Dendritic cell treated with granulocyte-macrophage colony-stimulating factor and Interleukin-4, amounts not matched to agents 40 ng/mL and 50 ng/mL, for 4 days (primary cell): ENCODE measurements at regions of chr17 and their contacts with region 1.

Region 1: GRCh38 chr17:83051395-83052233 is 27.8 kb upstream of the METRNL start:
- H3K4me3 Mint-ChIP-seq: peak overlapping the region; percentile 87
- H3K27ac Mint-ChIP-seq: peak overlapping the region; percentile 94
- H3K4me1 Mint-ChIP-seq: peaks cover 62% of the 10 kb centered on the region
- H3K27me3 Mint-ChIP-seq: no peaks in the 10 kb centered on the region

Region 2: GRCh38 chr17:81833160-81833920 is 1218.3 kb before region 1 on chr17 and contains the start of gene MCRIP1:
- intact Hi-C with region 1: no loop called
- H3K4me3 Mint-ChIP-seq: peak within 1 kb of the TSS; percentile 90
- H3K27ac Mint-ChIP-seq: peak within 1 kb of the TSS; percentile 97
- H3K4me1 Mint-ChIP-seq: peaks cover 64% of the 10 kb centered on the region
- H3K27me3 Mint-ChIP-seq: no peaks in the 10 kb centered on the region

Region 3: GRCh38 chr17:82962864-82963684 is 88.5 kb before region 1 on chr17:
- intact Hi-C with region 1: loop called (anchors 5 kb)
- H3K4me3 Mint-ChIP-seq: peak overlapping the region; percentile 62
- H3K27ac Mint-ChIP-seq: peak overlapping the region; percentile 79
- H3K4me1 Mint-ChIP-seq: peaks cover 31% of the 10 kb centered on the region
- H3K27me3 Mint-ChIP-seq: no peaks in the 10 kb centered on the region

Region 4: DNA sequence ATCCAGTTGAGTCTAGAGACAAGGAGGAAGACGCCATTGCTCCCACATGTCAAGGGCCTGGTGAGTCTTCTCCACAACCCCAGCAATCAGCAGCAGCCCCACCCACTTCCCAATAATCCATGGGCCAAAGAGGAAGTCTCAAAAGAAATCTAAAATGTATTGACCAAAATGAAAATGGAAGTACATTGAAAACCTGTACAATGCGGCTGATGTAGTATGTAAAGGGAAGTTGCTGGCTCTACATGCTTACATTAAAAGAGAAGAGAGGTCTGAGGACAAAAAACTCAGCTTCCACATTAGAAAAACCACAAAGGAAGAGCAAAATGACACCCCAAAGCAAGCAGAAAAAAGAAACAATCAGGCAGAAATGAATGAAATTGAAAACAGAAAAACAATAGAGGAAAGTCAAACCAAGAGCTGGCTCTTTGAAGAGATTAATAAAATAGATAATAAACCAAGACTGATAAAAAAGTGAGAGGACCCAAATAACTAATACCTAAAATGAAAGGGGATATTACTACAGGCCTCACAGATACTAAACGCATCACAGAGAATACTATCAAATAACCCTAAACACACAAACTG is 72.8 kb before region 1 on chr17:
- intact Hi-C with region 1: loop called (anchors 2 kb)
- H3K4me3 Mint-ChIP-seq: peak overlapping the region; percentile 57
- H3K27ac Mint-ChIP-seq: peak overlapping the region; percentile 90
- H3K4me1 Mint-ChIP-seq: peaks cover 44% of the 10 kb centered on the region
- H3K27me3 Mint-ChIP-seq: no peaks in the 10 kb centered on the region

Region 5: DNA sequence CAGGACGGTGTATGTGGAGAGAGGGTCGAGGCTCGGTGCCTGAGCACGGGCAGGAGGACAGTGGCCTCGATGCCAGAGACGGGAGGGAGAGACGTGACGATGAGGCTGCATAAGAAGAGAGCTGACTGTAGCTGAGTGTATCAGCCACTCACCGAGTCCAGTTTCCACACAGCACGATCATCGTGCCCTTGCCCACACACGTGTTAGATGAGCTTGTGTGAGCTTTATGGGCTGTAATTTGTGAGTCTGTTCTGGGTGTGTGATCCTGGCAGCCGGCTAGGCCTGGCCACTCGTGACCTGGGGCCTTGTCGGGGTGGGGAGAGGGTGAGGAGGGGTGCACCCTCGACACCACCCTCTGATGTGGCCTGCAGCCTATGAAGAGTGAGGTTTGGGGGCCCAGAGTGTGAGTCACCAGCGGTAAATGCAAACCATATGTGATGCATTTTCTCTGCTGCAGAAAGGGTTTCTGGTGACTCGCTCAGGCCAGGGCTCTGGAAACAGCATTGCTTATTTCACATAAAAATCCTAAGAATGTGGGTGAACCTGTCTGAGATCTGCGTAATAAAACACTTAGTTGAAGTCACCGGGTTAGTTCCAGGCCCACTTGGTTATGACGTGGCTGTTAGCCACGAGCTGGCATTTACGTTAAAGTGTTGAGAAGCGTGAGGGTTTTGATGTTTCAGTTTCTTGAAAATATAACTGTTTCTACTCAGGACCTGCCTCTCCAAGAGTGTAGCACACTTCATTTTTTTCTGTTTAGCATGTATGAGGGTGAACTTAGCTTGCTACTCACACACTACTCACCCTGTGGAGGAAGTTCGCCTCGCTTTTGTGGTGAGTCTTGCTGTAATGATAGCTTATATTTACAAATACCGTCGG is 31.9 kb after region 1 on chr17:
- intact Hi-C with region 1: loop called (anchors 2 kb)
- H3K4me3 Mint-ChIP-seq: peak overlapping the region; percentile 89
- H3K27ac Mint-ChIP-seq: peak overlapping the region; percentile 72
- H3K4me1 Mint-ChIP-seq: peaks cover 72% of the 10 kb centered on the region
- H3K27me3 Mint-ChIP-seq: peaks cover 2% of the 10 kb centered on the region